Activated B cell treated with CpG ODN at 0.5 μM for 24 hours (primary cell): ENCODE measurements at regions of chr6 and their contacts with region 1.

Region 1: DNA sequence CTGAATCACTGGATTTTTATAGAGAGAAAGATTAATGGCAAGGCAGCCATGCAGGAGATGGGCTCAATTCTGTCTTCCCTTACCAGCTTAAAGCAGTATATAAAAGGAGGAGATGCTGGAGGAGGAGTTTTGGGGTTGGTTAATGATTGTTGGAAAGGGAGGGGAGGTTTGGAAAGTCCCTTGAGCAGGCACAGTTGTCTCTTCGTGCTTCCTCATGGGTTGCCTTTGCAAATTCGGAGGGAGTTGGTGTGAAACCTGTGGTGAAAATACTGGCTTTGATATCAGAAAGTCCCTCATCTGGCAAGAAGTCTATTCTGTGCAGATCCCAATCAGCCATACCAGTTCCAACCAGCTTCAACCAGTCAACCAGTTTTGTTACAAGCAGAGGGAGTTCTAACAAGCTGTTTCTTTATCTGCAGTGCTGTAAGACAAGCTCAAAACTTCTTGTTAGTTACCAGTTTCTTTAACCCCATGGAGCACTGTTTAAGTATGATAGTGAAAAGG is 107.0 kb downstream of the HIVEP1 start:
- DNase-seq: no peak
- ATAC-seq: peak; percentile 87
- H3K4me3 Mint-ChIP-seq: peak overlapping the region; percentile 35
- H3K27ac Mint-ChIP-seq: peak overlapping the region; percentile 72
- H3K4me1 Mint-ChIP-seq: peaks cover 53% of the 10 kb centered on the region
- H3K27me3 Mint-ChIP-seq: no peaks in the 10 kb centered on the region
- CTCF ChIP-seq: no peak

Region 2: GRCh38 chr6:12051861-12052368 is 67.2 kb before region 1 on chr6:
- CTCF ChIA-PET with region 1: no interaction called
- POLR2A ChIA-PET with region 1: interaction called, 9 read pairs
- intact Hi-C with region 1: loop called (anchors 1 kb)
- DNase-seq: no peak
- ATAC-seq: peak; percentile 79
- H3K4me3 Mint-ChIP-seq: peak overlapping the region; percentile 81
- H3K27ac Mint-ChIP-seq: peak overlapping the region; percentile 97
- H3K4me1 Mint-ChIP-seq: peaks cover 78% of the 10 kb centered on the region
- H3K27me3 Mint-ChIP-seq: no peaks in the 10 kb centered on the region
- CTCF ChIP-seq: no peak

Region 3: DNA sequence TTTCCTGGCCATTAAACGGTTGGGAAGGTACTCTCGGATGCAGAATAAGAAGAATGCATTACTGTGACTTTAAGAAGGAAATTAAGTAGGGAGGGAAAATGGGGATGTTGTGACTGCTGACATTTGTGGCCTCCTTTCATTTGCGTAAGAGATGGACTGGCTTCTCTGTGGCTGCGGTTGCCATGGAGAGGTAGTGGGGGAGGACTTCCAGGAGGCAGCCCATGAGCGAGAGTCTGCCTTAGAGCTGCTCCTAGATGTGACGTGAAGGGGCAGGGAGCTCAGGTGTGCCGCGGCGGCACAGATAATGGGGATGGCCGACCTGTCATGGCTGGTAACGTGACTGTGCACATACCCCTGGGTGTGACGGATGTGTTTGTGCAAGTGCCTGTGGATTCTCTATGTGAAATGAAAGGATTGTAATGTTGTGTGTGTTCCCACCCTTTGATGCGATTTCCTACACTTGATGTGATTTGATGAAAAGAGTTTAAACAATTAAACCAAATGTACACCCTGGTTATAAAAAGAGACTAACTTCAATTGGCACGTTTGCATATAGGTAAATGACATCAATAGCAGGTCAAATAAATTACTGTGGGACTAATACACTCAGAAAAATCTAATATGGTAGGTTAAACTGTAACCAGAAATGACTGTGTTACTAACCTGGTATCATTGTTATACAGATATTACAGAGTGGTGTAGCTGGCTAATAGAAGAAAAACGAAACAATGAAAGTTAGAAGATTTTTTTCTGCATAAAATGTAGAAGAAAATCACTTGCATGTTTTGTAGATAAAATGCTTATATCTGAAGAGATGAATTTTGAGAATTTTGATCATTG is 58.1 kb before region 1 on chr6:
- CTCF ChIA-PET with region 1: no interaction called
- POLR2A ChIA-PET with region 1: interaction called, 10 read pairs
- intact Hi-C with region 1: loop called (anchors 1 kb)
- DNase-seq: peak; percentile 66
- ATAC-seq: peak; percentile 88
- H3K4me3 Mint-ChIP-seq: peak overlapping the region; percentile 90
- H3K27ac Mint-ChIP-seq: peak overlapping the region; percentile 97
- H3K4me1 Mint-ChIP-seq: peaks cover 78% of the 10 kb centered on the region
- H3K27me3 Mint-ChIP-seq: no peaks in the 10 kb centered on the region
- CTCF ChIP-seq: no peak

Region 4: GRCh38 chr6:12081771-12082170 is 37.4 kb before region 1 on chr6:
- CTCF ChIA-PET with region 1: interaction called, 3 read pairs
- POLR2A ChIA-PET with region 1: no interaction called
- intact Hi-C with region 1: loop called (anchors 5 kb)
- DNase-seq: no peak
- ATAC-seq: no peak
- H3K4me3 Mint-ChIP-seq: peak overlapping the region; percentile 53
- H3K27ac Mint-ChIP-seq: peak overlapping the region; percentile 43
- H3K4me1 Mint-ChIP-seq: peaks cover 45% of the 10 kb centered on the region
- H3K27me3 Mint-ChIP-seq: no peaks in the 10 kb centered on the region
- CTCF ChIP-seq: no peak

Region 5: DNA sequence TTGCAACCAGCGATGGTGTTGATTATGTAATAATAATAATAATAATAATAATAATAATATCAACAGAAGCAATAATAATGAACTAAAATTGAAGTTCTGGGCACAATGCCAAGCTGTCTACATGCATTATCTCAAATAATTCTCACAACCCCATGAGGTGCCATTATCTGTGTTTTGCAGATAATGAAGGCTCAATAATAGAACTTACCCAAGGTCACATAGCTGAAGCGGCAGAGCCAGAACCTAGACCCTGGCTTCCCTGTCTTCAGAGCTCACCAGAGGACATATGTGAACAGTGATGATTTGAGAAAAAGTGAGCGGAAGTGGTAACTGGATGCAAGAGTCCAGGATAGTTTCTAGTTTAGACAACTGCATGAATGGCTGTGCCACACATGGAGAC is 16.0 kb before region 1 on chr6:
- CTCF ChIA-PET with region 1: no interaction called
- POLR2A ChIA-PET with region 1: interaction called, 3 read pairs
- intact Hi-C with region 1: loop called (anchors 2 kb)
- DNase-seq: no peak
- ATAC-seq: no peak
- H3K4me3 Mint-ChIP-seq: no peak overlapping the region
- H3K27ac Mint-ChIP-seq: no peak overlapping the region
- H3K4me1 Mint-ChIP-seq: peaks cover 16% of the 10 kb centered on the region
- H3K27me3 Mint-ChIP-seq: no peaks in the 10 kb centered on the region
- CTCF ChIP-seq: no peak

Region 6: DNA sequence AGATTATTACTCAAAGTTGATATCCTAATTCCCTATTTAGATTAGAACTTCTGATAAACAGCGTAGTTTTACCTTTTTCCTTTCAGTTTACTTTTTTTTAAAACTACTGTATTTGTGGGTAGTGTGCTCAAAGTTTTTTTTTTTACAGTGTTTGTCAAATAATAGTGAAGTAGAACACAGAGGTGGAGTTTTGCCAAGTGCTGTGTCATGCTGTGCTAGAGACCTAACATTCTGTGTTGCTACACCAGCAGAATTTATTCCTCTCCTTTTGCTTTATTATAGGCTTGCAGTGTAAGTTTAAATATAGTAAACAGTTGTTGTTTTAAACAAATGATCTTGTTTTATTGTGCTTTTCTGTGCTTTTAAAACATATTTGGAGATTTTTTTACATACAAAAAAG is 18.3 kb after region 1 on chr6:
- CTCF ChIA-PET with region 1: no interaction called
- POLR2A ChIA-PET with region 1: interaction called, 4 read pairs
- intact Hi-C with region 1: loop called (anchors 2 kb)
- DNase-seq: no peak
- ATAC-seq: no peak
- H3K4me3 Mint-ChIP-seq: no peak overlapping the region
- H3K27ac Mint-ChIP-seq: no peak overlapping the region
- H3K4me1 Mint-ChIP-seq: peaks cover 4% of the 10 kb centered on the region
- H3K27me3 Mint-ChIP-seq: no peaks in the 10 kb centered on the region
- CTCF ChIP-seq: no peak

Region 7: GRCh38 chr6:12182676-12183075 is 63.5 kb after region 1 on chr6:
- CTCF ChIA-PET with region 1: no interaction called
- POLR2A ChIA-PET with region 1: no interaction called
- intact Hi-C with region 1: no loop called
- DNase-seq: no peak
- ATAC-seq: no peak
- H3K4me3 Mint-ChIP-seq: no peak overlapping the region
- H3K27ac Mint-ChIP-seq: no peak overlapping the region
- H3K4me1 Mint-ChIP-seq: no peaks in the 10 kb centered on the region
- H3K27me3 Mint-ChIP-seq: no peaks in the 10 kb centered on the region
- CTCF ChIP-seq: no peak